ENCODE measurements at regions of chr5 and their contacts with region 1.

Region 1: DNA sequence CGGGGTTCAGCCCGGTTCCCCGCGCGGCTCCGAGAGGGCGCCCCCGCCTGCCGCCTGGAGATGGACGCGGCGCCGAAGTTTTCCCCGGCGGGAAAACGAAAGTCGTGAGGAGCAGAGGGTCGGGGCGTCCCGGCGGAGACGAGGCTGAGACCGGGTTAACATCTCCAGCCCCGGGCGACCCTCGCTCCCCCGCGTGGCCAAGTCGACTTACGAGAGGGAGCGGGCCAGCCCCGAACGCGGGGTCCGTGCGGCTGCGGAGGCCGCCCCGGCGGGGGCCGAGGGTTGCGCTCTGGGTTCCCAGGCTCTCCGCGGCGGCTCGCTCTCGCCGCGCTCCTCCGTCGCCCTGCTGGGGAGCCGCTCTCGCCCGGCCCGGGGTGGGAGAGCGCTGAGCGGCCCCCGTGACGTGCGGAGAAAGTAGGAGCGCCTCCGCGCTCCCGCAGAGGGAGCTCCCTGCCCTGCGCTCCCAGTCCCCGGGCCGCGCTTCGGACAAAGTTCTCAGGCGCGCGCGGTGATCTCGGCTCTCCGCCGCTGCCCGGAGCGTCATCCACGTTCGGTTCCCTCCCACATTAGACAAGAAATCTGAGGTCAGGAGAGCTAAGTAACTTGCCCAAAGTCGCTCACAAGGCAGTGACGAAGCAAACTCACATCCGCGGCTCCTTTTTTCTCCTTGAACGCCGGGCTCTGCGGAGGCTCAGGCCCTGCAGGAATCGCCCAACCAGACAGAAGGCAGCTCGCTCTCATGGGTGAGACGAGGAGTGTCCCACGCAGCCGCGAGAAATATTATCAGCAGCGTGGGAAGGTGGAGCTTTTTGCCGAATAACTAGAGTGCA is 1.2 kb upstream of the GCNT4 start:
- DNase-seq: peak; percentile 68 to 80
- H3K4me3 ChIP-seq: peak overlapping the region; percentile 81
- H3K4me3 Mint-ChIP-seq: peak overlapping the region; percentile 86
- H3K27ac Mint-ChIP-seq: peak overlapping the region; percentile 67
- H3K4me1 ChIP-seq: peaks cover 34% of the 10 kb centered on the region
- H3K4me1 Mint-ChIP-seq: peaks cover 35% of the 10 kb centered on the region
- H3K27me3 ChIP-seq: no peaks in the 10 kb centered on the region; the same call in 1 of the 2 replicates
- H3K27me3 Mint-ChIP-seq: no peaks in the 10 kb centered on the region
- CTCF ChIP-seq: peak; percentile 15 to 17

Region 2: GRCh38 chr5:74684900-74685851 is 368.3 kb before region 1 on chr5 and contains the start of gene HEXB:
- CTCF ChIA-PET with region 1: no interaction called
- POLR2A ChIA-PET with region 1: no interaction called
- intact Hi-C with region 1: loop called (anchors 2 kb)
- DNase-seq: peak; percentile 93 to 94
- H3K4me3 ChIP-seq: peak within 1 kb of the TSS; percentile 96
- H3K4me3 Mint-ChIP-seq: peak within 1 kb of the TSS; percentile 71
- H3K27ac Mint-ChIP-seq: peak within 1 kb of the TSS; percentile 8
- H3K4me1 ChIP-seq: peaks cover 13% of the 10 kb centered on the region
- H3K4me1 Mint-ChIP-seq: peaks cover 27% of the 10 kb centered on the region
- H3K27me3 ChIP-seq: no peaks in the 10 kb centered on the region
- H3K27me3 Mint-ChIP-seq: no peaks in the 10 kb centered on the region
- CTCF ChIP-seq: peak in 1 of 2 experiments; percentile 7
- total RNA-seq, gene HEXB: 217 and 230 TPM in 2 replicates

Region 3: GRCh38 chr5:74927336-74927735 is 126.2 kb before region 1 on chr5:
- CTCF ChIA-PET with region 1: interaction called, 3 read pairs
- POLR2A ChIA-PET with region 1: no interaction called
- intact Hi-C with region 1: loop called (anchors 1 kb)
- DNase-seq: no peak
- H3K4me3 ChIP-seq: no peak overlapping the region
- H3K4me3 Mint-ChIP-seq: no peak overlapping the region
- H3K27ac Mint-ChIP-seq: no peak overlapping the region
- H3K4me1 ChIP-seq: no peaks in the 10 kb centered on the region
- H3K4me1 Mint-ChIP-seq: no peaks in the 10 kb centered on the region
- H3K27me3 ChIP-seq: no peaks in the 10 kb centered on the region
- H3K27me3 Mint-ChIP-seq: no peaks in the 10 kb centered on the region
- CTCF ChIP-seq: no peak

Region 4: GRCh38 chr5:74953940-74954720 is 99.4 kb before region 1 on chr5:
- CTCF ChIA-PET with region 1: no interaction called
- POLR2A ChIA-PET with region 1: no interaction called
- intact Hi-C with region 1: loop called (anchors 2 kb)
- DNase-seq: peak; percentile 52 to 85
- H3K4me3 ChIP-seq: no peak overlapping the region
- H3K4me3 Mint-ChIP-seq: peak overlapping the region; percentile 30
- H3K27ac Mint-ChIP-seq: peak overlapping the region; percentile 91
- H3K4me1 ChIP-seq: peaks cover 86% of the 10 kb centered on the region
- H3K4me1 Mint-ChIP-seq: peaks cover 71% of the 10 kb centered on the region
- H3K27me3 ChIP-seq: no peaks in the 10 kb centered on the region
- H3K27me3 Mint-ChIP-seq: no peaks in the 10 kb centered on the region
- CTCF ChIP-seq: no peak

Region 5: GRCh38 chr5:75167345-75167744 is 113.8 kb after region 1 on chr5:
- CTCF ChIA-PET with region 1: no interaction called
- POLR2A ChIA-PET with region 1: no interaction called
- intact Hi-C with region 1: loop called (anchors 5 kb)
- DNase-seq: peak in 1 of 2 experiments; percentile 13
- H3K4me3 ChIP-seq: no peak overlapping the region
- H3K4me3 Mint-ChIP-seq: no peak overlapping the region
- H3K27ac Mint-ChIP-seq: no peak overlapping the region
- H3K4me1 ChIP-seq: peaks cover 19% of the 10 kb centered on the region
- H3K4me1 Mint-ChIP-seq: peaks cover 17% of the 10 kb centered on the region
- H3K27me3 ChIP-seq: no peaks in the 10 kb centered on the region
- H3K27me3 Mint-ChIP-seq: no peaks in the 10 kb centered on the region
- CTCF ChIP-seq: peak in 1 of 2 experiments; percentile 19

Region 6: GRCh38 chr5:75236322-75237316 is 183.1 kb after region 1 on chr5 and contains the start of gene ANKRD31:
- CTCF ChIA-PET with region 1: interaction called, 3 read pairs
- POLR2A ChIA-PET with region 1: no interaction called
- intact Hi-C with region 1: loop called (anchors 10 kb)
- DNase-seq: peak; percentile 72 to 90
- H3K4me3 ChIP-seq: peak within 1 kb of the TSS; percentile 91
- H3K4me3 Mint-ChIP-seq: peak within 1 kb of the TSS; percentile 80
- H3K27ac Mint-ChIP-seq: peak within 1 kb of the TSS; percentile 82
- H3K4me1 ChIP-seq: peaks cover 24% of the 10 kb centered on the region
- H3K4me1 Mint-ChIP-seq: peaks cover 8% of the 10 kb centered on the region
- H3K27me3 ChIP-seq: no peaks in the 10 kb centered on the region
- H3K27me3 Mint-ChIP-seq: no peaks in the 10 kb centered on the region
- CTCF ChIP-seq: peak; percentile 38 to 86
- total RNA-seq, gene ANKRD31: 0.66 and 0.79 TPM in 2 replicates

Region 7: DNA sequence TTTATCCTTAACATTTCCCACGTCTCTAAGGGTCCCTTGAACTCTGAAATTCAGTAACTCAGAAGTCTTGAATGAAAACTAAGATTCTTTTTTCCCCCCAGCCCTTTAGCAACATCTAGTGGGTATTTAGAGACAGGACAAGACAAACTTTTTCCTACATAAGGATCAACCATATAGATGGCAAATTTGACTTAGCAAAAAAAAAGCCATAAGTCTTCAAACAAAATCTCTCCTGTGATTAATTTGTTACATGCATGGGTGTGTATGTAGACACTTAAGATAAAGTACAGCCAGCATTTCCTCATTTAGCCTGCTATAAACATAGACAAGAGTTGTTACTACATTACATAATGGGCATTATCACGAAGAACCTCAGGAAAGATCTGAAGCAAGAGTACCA is 212.2 kb after region 1 on chr5:
- CTCF ChIA-PET with region 1: no interaction called
- POLR2A ChIA-PET with region 1: interaction called, 3 read pairs
- intact Hi-C with region 1: loop called (anchors 1 kb)
- DNase-seq: peak in 1 of 2 experiments; percentile 42
- H3K4me3 ChIP-seq: no peak overlapping the region
- H3K4me3 Mint-ChIP-seq: no peak overlapping the region
- H3K27ac Mint-ChIP-seq: peak overlapping the region; percentile 43
- H3K4me1 ChIP-seq: peaks cover 18% of the 10 kb centered on the region
- H3K4me1 Mint-ChIP-seq: peaks cover 17% of the 10 kb centered on the region
- H3K27me3 ChIP-seq: no peaks in the 10 kb centered on the region
- H3K27me3 Mint-ChIP-seq: no peaks in the 10 kb centered on the region
- CTCF ChIP-seq: peak; percentile 60 to 88